ENCODE measurements at regions of chr14 and their contacts with region 1.

Region 1: GRCh38 chr14:61403411-61403810 is 82.0 kb downstream of the PRKCH start:
- DNase-seq: peak in 1 of 2 donors; percentile 76
- ATAC-seq: peak; percentile 68 to 83 (median 83)
- H3K4me3 ChIP-seq: no peak overlapping the region
- H3K4me3 Mint-ChIP-seq: peak overlapping the region; percentile 71
- H3K27ac ChIP-seq: peak overlapping the region; percentile 75
- H3K27ac Mint-ChIP-seq: no peak overlapping the region
- H3K4me1 ChIP-seq: peaks cover 58% of the 10 kb centered on the region
- H3K4me1 Mint-ChIP-seq: peaks cover 88 to 91% of the 10 kb centered on the region in 2 donors
- H3K27me3 ChIP-seq: no peaks in the 10 kb centered on the region
- H3K27me3 Mint-ChIP-seq: no peaks in the 10 kb centered on the region
- CTCF ChIP-seq: no peak

Region 2: DNA sequence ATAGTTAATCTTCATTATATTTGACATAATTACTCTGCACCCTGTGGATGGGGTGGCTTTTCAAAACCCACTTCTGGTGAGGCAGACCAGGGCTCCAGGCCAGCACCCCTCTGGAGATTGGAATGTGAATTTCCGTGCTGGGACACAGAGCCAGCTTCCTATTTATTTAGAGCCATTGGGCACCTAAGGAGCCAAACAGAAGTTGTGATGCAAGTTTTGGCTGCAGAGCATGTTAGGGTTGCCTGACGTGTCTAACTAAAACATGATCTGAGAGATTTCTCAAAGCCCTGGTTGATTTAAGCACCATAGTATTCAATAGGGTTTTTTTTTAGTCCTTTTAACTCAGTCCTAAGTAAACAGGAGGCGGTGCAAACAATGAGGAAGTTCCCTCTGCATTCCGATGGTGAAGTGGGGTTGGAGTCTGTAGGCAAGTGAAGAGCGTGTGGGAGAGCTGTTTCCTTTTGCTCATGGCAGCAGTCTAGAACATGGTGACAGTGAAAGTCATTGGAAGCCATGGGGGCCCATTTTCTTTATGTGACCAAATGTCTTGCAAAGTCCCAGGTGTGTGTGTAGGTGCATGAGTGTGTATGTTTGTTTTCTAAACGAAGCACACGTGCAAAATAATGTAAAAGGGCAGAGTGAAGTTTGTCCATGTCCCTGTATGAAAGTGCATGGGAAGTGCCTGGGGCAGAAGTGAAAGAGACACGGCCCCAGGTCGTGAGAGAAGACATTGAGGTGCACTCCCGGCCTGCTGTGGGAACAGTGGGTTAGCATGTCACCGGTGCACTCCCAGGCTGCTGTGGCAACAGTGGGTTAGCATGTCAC is 35.7 kb after region 1 on chr14:
- intact Hi-C with region 1: loop called (anchors 5 kb)
- DNase-seq: peak in 1 of 2 donors; percentile 78
- ATAC-seq: peak; percentile 25 to 49 (median 40)
- H3K4me3 ChIP-seq: no peak overlapping the region
- H3K4me3 Mint-ChIP-seq: peak overlapping the region; percentile 92
- H3K27ac ChIP-seq: peak overlapping the region; percentile 74
- H3K27ac Mint-ChIP-seq: no peak overlapping the region
- H3K4me1 ChIP-seq: peaks cover 78% of the 10 kb centered on the region
- H3K4me1 Mint-ChIP-seq: peaks cover 92 to 96% of the 10 kb centered on the region in 2 donors
- H3K27me3 ChIP-seq: no peaks in the 10 kb centered on the region
- H3K27me3 Mint-ChIP-seq: no peaks in the 10 kb centered on the region
- CTCF ChIP-seq: no peak